MCF 10A (cell line): ENCODE measurements at regions of chr20 and their contacts with region 1.

Region 1: GRCh38 chr20:53805895-53806384 is 212.3 kb upstream of the ZNF217 start:
- DNase-seq: peak; percentile 95
- H3K4me3 Mint-ChIP-seq: peak overlapping the region; percentile 19
- H3K27ac Mint-ChIP-seq: peak overlapping the region; percentile 86
- H3K4me1 Mint-ChIP-seq: peaks cover 25% of the 10 kb centered on the region
- H3K27me3 Mint-ChIP-seq: no peaks in the 10 kb centered on the region
- CTCF ChIP-seq: no peak

Region 2: DNA sequence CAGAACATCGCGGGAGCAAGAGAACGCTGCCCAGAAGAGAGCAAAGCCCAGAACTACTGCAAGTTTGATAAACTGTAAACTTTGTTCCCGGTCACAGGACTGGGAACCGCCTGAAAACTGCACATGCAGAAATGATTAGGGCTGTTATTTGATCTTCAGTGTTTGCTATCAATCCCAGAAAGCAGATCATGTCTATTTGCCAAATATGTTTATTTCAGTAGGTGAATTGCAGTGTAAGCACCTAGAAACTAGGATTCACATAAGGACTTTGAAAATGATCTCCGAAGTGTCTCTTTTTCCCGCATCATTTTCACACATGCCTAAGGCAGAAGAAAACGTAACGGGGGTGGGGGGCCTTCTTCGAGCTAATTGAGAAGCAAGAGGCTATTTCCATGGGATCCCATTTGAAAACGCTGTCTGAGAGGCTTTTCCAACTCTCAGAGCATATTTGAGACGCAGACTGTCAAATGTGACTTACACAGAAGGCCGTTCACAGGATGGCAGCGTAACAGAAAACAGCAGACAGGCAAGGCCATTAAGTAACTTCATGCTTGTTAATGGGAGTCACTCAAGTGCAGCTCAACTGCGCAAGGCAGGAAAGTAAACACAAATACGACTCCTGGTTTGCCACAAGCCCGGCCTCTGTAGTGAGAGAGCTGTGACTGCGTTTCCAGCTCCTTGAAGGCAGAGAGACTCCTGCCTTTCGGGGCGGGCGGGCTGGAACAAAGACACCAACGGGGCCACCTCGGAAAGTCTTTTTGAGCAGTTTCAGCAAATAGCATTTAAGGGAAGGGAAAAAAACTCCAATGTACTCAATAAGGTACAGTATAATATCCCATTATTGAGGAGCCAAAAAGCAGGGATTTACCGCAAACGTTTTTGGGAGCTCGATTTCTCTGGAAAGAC is 67.6 kb before region 1 on chr20:
- CTCF ChIA-PET with region 1: interaction called, 3 read pairs
- POLR2A ChIA-PET with region 1: interaction called, 13 read pairs
- intact Hi-C with region 1: no loop called
- DNase-seq: no peak
- H3K4me3 Mint-ChIP-seq: no peak overlapping the region
- H3K27ac Mint-ChIP-seq: no peak overlapping the region
- H3K4me1 Mint-ChIP-seq: peaks cover 32% of the 10 kb centered on the region
- H3K27me3 Mint-ChIP-seq: no peaks in the 10 kb centered on the region
- CTCF ChIP-seq: no peak

Region 3: GRCh38 chr20:53795170-53795569 is 10.8 kb before region 1 on chr20:
- CTCF ChIA-PET with region 1: interaction called, 4 read pairs
- POLR2A ChIA-PET with region 1: interaction called, 20 read pairs
- intact Hi-C with region 1: no loop called
- DNase-seq: no peak
- H3K4me3 Mint-ChIP-seq: no peak overlapping the region
- H3K27ac Mint-ChIP-seq: no peak overlapping the region
- H3K4me1 Mint-ChIP-seq: peaks cover 11% of the 10 kb centered on the region
- H3K27me3 Mint-ChIP-seq: no peaks in the 10 kb centered on the region
- CTCF ChIP-seq: no peak

Region 4: GRCh38 chr20:53819973-53820451 is 14.1 kb after region 1 on chr20:
- CTCF ChIA-PET with region 1: interaction called, 4 read pairs
- POLR2A ChIA-PET with region 1: interaction called, 14 read pairs
- intact Hi-C with region 1: no loop called
- DNase-seq: peak; percentile 40
- H3K4me3 Mint-ChIP-seq: no peak overlapping the region
- H3K27ac Mint-ChIP-seq: peak overlapping the region; percentile 76
- H3K4me1 Mint-ChIP-seq: peaks cover 12% of the 10 kb centered on the region
- H3K27me3 Mint-ChIP-seq: no peaks in the 10 kb centered on the region
- CTCF ChIP-seq: no peak